ENCODE measurements at regions of chr3 and their contacts with region 1.

Region 1: GRCh38 chr3:53303957-53304356 is 43.4 kb downstream of the DCP1A start:
- DNase-seq: peak; percentile 11
- ATAC-seq: no peak
- H3K4me3 ChIP-seq: no peak overlapping the region
- H3K27ac ChIP-seq: no peak overlapping the region
- H3K4me1 ChIP-seq: peaks cover 2% of the 10 kb centered on the region; the same call in 1 of the 2 replicates
- H3K27me3 ChIP-seq: no peaks in the 10 kb centered on the region
- CTCF ChIP-seq: no peak
- POLR2A ChIP-seq: no peak
- RAD21 ChIP-seq: no peak

Region 2: DNA sequence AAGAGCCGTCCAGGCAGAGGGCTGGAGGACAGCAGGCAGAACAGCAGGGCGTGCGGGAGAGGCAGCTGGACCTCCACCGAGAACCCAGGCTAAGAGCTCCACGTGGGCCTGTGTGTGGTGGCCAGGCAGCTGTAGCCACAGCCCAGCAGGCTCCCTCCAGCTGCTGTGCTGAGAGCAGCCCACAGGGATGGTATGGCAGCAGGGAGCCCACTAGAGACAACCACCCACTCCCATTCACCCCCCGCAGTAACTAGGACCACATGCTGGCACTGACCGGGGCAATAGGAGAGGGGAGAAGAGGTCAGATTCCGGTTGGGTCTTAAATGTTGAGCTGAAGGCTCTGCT is 443.6 kb before region 1 on chr3:
- CTCF ChIA-PET with region 1: no interaction called
- POLR2A ChIA-PET with region 1: no interaction called
- dilution Hi-C with region 1: no loop called
- in situ Hi-C with region 1: no loop called
- intact Hi-C with region 1: no loop called
- DNase-seq: no peak
- ATAC-seq: no peak
- H3K4me3 ChIP-seq: no peak overlapping the region
- H3K27ac ChIP-seq: no peak overlapping the region
- H3K4me1 ChIP-seq: no peaks in the 10 kb centered on the region
- H3K27me3 ChIP-seq: no peaks in the 10 kb centered on the region
- CTCF ChIP-seq: no peak
- POLR2A ChIP-seq: no peak
- RAD21 ChIP-seq: no peak

Region 3: GRCh38 chr3:53375019-53375418 is 71.1 kb after region 1 on chr3:
- CTCF ChIA-PET with region 1: no interaction called
- POLR2A ChIA-PET with region 1: no interaction called
- dilution Hi-C with region 1: no loop called
- in situ Hi-C with region 1: no loop called
- intact Hi-C with region 1: loop called (anchors 1 kb)
- DNase-seq: peak; percentile 41
- ATAC-seq: peak; percentile 87
- H3K4me3 ChIP-seq: no peak overlapping the region
- H3K27ac ChIP-seq: no peak overlapping the region
- H3K4me1 ChIP-seq: no peaks in the 10 kb centered on the region
- H3K27me3 ChIP-seq: peaks cover 2% of the 10 kb centered on the region; the same call in 1 of the 2 replicates
- CTCF ChIP-seq: peak; percentile 59
- POLR2A ChIP-seq: no peak
- RAD21 ChIP-seq: peak; percentile 70

Measured in IMR-90 (cell line).